Activated CD4-positive, alpha-beta memory T cell treated with anti-CD3 and anti-CD28 coated beads for 36 hours (primary cell): ENCODE measurements at regions of chr12 and their contacts with region 1.

Region 1: GRCh38 chr12:110100315-110100970 is 23.7 kb upstream of the IFT81 start:
- DNase-seq: peak; percentile 70
- H3K4me3 Mint-ChIP-seq: no peak overlapping the region
- H3K27ac Mint-ChIP-seq: peak overlapping the region; percentile 0
- H3K4me1 Mint-ChIP-seq: peaks cover 7% of the 10 kb centered on the region
- H3K27me3 Mint-ChIP-seq: no peaks in the 10 kb centered on the region

Region 2: GRCh38 chr12:110048242-110049027 is 52.0 kb before region 1 on chr12 and contains the start of gene C12orf76:
- CTCF ChIA-PET with region 1: interaction called, 5 read pairs
- POLR2A ChIA-PET with region 1: no interaction called
- intact Hi-C with region 1: loop called (anchors 2 kb)
- DNase-seq: peak; percentile 95
- H3K4me3 Mint-ChIP-seq: peak within 1 kb of the TSS; percentile 89
- H3K27ac Mint-ChIP-seq: peak within 1 kb of the TSS; percentile 94
- H3K4me1 Mint-ChIP-seq: peaks cover 38% of the 10 kb centered on the region
- H3K27me3 Mint-ChIP-seq: no peaks in the 10 kb centered on the region
- total RNA-seq, gene C12orf76: 14.2 to 17.1 TPM

Region 3: DNA sequence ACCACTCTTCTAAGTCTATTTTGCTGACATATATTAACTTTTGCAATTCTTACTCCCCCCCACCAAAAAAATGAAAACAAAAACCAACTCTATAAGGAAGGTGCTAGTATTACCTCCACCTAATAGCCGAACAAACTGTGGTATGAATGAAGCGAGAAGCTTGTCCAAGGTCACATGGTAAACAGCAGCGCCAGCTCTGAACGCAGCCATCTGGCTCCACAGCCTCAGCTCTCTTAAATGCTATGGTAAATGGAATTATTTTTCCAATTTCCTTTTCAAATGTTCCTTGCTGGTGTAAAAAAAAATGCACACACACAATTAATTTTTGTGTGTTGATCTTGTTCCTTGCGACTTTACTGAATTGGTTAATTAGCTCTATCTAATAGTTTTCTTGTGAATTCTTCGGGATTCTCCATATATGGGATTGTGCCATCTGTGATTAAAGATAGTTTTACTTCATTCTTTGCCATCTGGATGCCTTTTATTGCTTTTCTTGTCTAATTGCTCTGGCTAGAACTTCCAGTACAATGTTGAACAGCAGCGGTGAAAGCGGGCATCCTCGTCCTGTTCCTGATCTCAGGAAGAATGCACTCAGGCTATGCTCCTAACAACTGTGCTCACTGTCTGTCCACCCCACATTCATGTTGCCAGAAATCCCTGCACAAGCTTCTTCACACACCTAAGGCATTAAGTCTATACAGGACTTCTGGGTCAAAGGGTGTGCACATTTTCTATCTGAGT is 41.4 kb before region 1 on chr12:
- CTCF ChIA-PET with region 1: no interaction called
- POLR2A ChIA-PET with region 1: no interaction called
- intact Hi-C with region 1: no loop called
- DNase-seq: no peak
- H3K4me3 Mint-ChIP-seq: no peak overlapping the region
- H3K27ac Mint-ChIP-seq: peak overlapping the region; percentile 67
- H3K4me1 Mint-ChIP-seq: peaks cover 47% of the 10 kb centered on the region
- H3K27me3 Mint-ChIP-seq: no peaks in the 10 kb centered on the region

Region 4: GRCh38 chr12:110114528-110114937 is 14.1 kb after region 1 on chr12:
- CTCF ChIA-PET with region 1: interaction called, 14 read pairs
- POLR2A ChIA-PET with region 1: no interaction called
- intact Hi-C with region 1: no loop called
- DNase-seq: no peak
- H3K4me3 Mint-ChIP-seq: no peak overlapping the region
- H3K27ac Mint-ChIP-seq: no peak overlapping the region
- H3K4me1 Mint-ChIP-seq: no peaks in the 10 kb centered on the region
- H3K27me3 Mint-ChIP-seq: peaks cover 1% of the 10 kb centered on the region

Region 5: GRCh38 chr12:110245369-110245772 is 144.9 kb after region 1 on chr12:
- CTCF ChIA-PET with region 1: interaction called, 19 read pairs
- POLR2A ChIA-PET with region 1: no interaction called
- intact Hi-C with region 1: loop called (anchors 1 kb)
- DNase-seq: peak; percentile 58
- H3K4me3 Mint-ChIP-seq: no peak overlapping the region
- H3K27ac Mint-ChIP-seq: no peak overlapping the region
- H3K4me1 Mint-ChIP-seq: no peaks in the 10 kb centered on the region
- H3K27me3 Mint-ChIP-seq: no peaks in the 10 kb centered on the region